OCI-LY7 (cell line): ENCODE measurements at regions of chr13 and their contacts with region 1.

Region 1: DNA sequence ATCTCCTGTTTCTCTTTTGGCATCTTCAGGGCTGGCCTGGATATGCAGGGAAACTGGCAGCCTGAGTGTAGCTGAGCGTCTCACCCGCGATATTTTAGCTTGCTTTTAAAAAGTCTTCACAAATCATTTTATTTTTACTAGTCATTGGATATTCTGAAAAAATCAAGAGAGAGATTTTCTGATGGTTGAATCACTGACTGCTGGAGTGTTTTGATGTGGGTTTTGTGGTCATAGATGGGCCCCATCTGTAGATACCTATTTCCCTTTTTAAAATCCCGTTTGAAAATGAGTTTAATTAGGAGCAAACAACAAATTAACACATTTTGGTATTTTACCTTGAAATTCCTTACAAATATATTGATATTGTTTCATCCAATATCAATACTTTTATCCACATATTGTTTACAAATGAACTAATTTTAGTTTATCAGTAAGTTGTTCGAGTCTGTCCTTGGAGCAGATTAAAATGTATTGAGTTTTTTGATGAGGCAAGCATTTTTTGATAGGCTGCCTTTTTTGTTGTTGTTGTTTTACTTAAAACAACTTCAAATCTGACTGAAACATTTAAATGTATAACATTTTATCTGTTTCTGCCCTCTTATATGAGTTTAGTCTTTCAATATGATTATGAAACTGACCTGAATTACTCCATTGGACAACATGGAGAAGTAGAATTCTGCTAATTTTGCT is 21.5 kb upstream of the OXGR1 start:
- DNase-seq: peak; percentile 64
- H3K4me3 ChIP-seq: peak overlapping the region; percentile 46
- H3K27ac ChIP-seq: peak overlapping the region; percentile 67
- H3K4me1 ChIP-seq: peaks cover 30% of the 10 kb centered on the region
- CTCF ChIP-seq: no peak

Region 2: GRCh38 chr13:97004096-97004876 is 11.5 kb before region 1 on chr13:
- CTCF ChIA-PET with region 1: no interaction called
- POLR2A ChIA-PET with region 1: interaction called, 10 read pairs
- intact Hi-C with region 1: no loop called
- DNase-seq: no peak
- H3K4me3 ChIP-seq: no peak overlapping the region
- H3K27ac ChIP-seq: no peak overlapping the region
- H3K4me1 ChIP-seq: peaks cover 27% of the 10 kb centered on the region
- CTCF ChIP-seq: no peak

Region 3: GRCh38 chr13:97030705-97031452 is 15.1 kb after region 1 on chr13:
- CTCF ChIA-PET with region 1: no interaction called
- POLR2A ChIA-PET with region 1: no interaction called
- intact Hi-C with region 1: no loop called
- DNase-seq: no peak
- H3K4me3 ChIP-seq: no peak overlapping the region
- H3K27ac ChIP-seq: no peak overlapping the region
- H3K4me1 ChIP-seq: no peaks in the 10 kb centered on the region
- CTCF ChIP-seq: peak; percentile 32; the same call in 1 of the 2 replicates